ENCODE measurements at regions of chr2 and their contacts with region 1.

Region 1: GRCh38 chr2:96913398-96914202 is 43.7 kb upstream of the SEMA4C start:
- DNase-seq: peak; percentile 62 to 76 (median 67)
- H3K4me3 ChIP-seq: peak overlapping the region; percentile 57 to 76
- H3K4me3 Mint-ChIP-seq: peak overlapping the region; percentile 83 to 93 (median 88)
- H3K27ac ChIP-seq: peak overlapping the region; percentile 54
- H3K27ac Mint-ChIP-seq: peak overlapping the region; percentile 81 to 98 (median 97)
- H3K4me1 ChIP-seq: peaks cover 64% of the 10 kb centered on the region
- H3K4me1 Mint-ChIP-seq: peaks cover 45 to 85% (median 70%) of the 10 kb centered on the region in 4 donors
- H3K27me3 ChIP-seq: no peaks in the 10 kb centered on the region
- H3K27me3 Mint-ChIP-seq: no peaks in the 10 kb centered on the region

Region 2: GRCh38 chr2:96554293-96555145 is 359.1 kb before region 1 on chr2:
- CTCF ChIA-PET with region 1: no interaction called
- POLR2A ChIA-PET with region 1: no interaction called
- intact Hi-C with region 1: no loop called
- DNase-seq: peak; percentile 46 to 80 (median 69)
- H3K4me3 ChIP-seq: no peak overlapping the region
- H3K4me3 Mint-ChIP-seq: peak overlapping the region in 7 of 8 donors; percentile 15 to 69 (median 32)
- H3K27ac ChIP-seq: no peak overlapping the region
- H3K27ac Mint-ChIP-seq: peak overlapping the region in 4 of 7 donors; percentile 22 to 86 (median 82)
- H3K4me1 ChIP-seq: peaks cover 17% of the 10 kb centered on the region
- H3K4me1 Mint-ChIP-seq: peaks cover 1 to 32% (median 12%) of the 10 kb centered on the region in 4 donors
- H3K27me3 ChIP-seq: no peaks in the 10 kb centered on the region
- H3K27me3 Mint-ChIP-seq: no peaks in the 10 kb centered on the region

Region 3: DNA sequence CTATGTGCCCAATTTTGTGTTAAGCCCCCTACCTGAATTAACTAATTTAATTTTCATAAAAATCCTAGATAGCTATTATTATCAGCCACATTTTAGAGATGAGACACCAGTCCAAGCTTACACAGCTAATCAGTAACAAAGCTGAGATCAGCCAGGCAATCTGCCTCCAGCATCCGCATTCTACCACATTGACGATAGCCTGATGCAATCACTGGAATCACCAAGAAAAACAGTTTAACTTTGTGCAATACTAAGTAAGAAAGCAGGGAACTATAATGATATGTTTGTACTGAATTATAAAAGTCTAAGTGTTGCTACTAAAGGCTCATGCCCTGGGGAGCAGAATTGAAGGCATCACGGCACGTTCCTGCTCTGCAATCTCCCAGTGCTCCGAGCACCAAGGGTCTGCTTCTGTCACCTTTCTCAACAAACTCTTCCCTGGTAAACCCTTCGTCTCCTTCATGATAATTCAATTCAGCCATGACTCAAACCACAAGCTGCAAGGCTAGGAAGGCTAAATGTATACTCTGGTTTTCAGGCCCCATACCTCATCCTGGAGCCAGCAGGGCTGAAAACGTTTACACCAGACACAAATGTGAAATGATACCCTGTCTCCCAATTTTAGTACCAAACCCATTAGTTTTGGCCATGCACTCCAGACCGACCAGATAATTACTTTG is 294.9 kb before region 1 on chr2:
- CTCF ChIA-PET with region 1: no interaction called
- POLR2A ChIA-PET with region 1: no interaction called
- intact Hi-C with region 1: no loop called
- DNase-seq: no peak
- H3K4me3 ChIP-seq: no peak overlapping the region
- H3K4me3 Mint-ChIP-seq: no peak overlapping the region
- H3K27ac ChIP-seq: no peak overlapping the region
- H3K27ac Mint-ChIP-seq: peak overlapping the region in 3 of 7 donors; percentile 11 to 50 (median 43)
- H3K4me1 ChIP-seq: peaks cover 13% of the 10 kb centered on the region
- H3K4me1 Mint-ChIP-seq: peaks cover 13 to 40% (median 25%) of the 10 kb centered on the region in 4 donors
- H3K27me3 ChIP-seq: no peaks in the 10 kb centered on the region
- H3K27me3 Mint-ChIP-seq: no peaks in the 10 kb centered on the region

Region 4: GRCh38 chr2:96663789-96664645 is 249.6 kb before region 1 on chr2:
- CTCF ChIA-PET with region 1: no interaction called
- POLR2A ChIA-PET with region 1: no interaction called
- intact Hi-C with region 1: no loop called
- DNase-seq: no peak
- H3K4me3 ChIP-seq: no peak overlapping the region
- H3K4me3 Mint-ChIP-seq: no peak overlapping the region
- H3K27ac ChIP-seq: no peak overlapping the region
- H3K27ac Mint-ChIP-seq: no peak overlapping the region
- H3K4me1 ChIP-seq: no peaks in the 10 kb centered on the region
- H3K4me1 Mint-ChIP-seq: no peaks in the 10 kb centered on the region
- H3K27me3 ChIP-seq: no peaks in the 10 kb centered on the region
- H3K27me3 Mint-ChIP-seq: peaks cover 0 to 3% of the 10 kb centered on the region in 2 donors

Region 5: GRCh38 chr2:96888072-96889011 is 25.3 kb before region 1 on chr2:
- CTCF ChIA-PET with region 1: interaction called, 4 read pairs
- POLR2A ChIA-PET with region 1: interaction called, 50 read pairs
- intact Hi-C with region 1: no loop called
- DNase-seq: no peak
- H3K4me3 ChIP-seq: no peak overlapping the region
- H3K4me3 Mint-ChIP-seq: no peak overlapping the region
- H3K27ac ChIP-seq: no peak overlapping the region
- H3K27ac Mint-ChIP-seq: peak overlapping the region in 4 of 7 donors; percentile 50 to 86 (median 78)
- H3K4me1 ChIP-seq: peaks cover 30% of the 10 kb centered on the region
- H3K4me1 Mint-ChIP-seq: peaks cover 30 to 46% (median 36%) of the 10 kb centered on the region in 4 donors
- H3K27me3 ChIP-seq: no peaks in the 10 kb centered on the region
- H3K27me3 Mint-ChIP-seq: no peaks in the 10 kb centered on the region

Region 6: GRCh38 chr2:96903327-96903726 is 10.3 kb before region 1 on chr2:
- CTCF ChIA-PET with region 1: no interaction called
- POLR2A ChIA-PET with region 1: interaction called, 12 read pairs
- intact Hi-C with region 1: no loop called
- DNase-seq: no peak
- H3K4me3 ChIP-seq: no peak overlapping the region
- H3K4me3 Mint-ChIP-seq: no peak overlapping the region
- H3K27ac ChIP-seq: no peak overlapping the region
- H3K27ac Mint-ChIP-seq: no peak overlapping the region
- H3K4me1 ChIP-seq: peaks cover 4% of the 10 kb centered on the region
- H3K4me1 Mint-ChIP-seq: peaks cover 5 to 11% (median 10%) of the 10 kb centered on the region in 4 donors
- H3K27me3 ChIP-seq: no peaks in the 10 kb centered on the region
- H3K27me3 Mint-ChIP-seq: no peaks in the 10 kb centered on the region

Region 7: DNA sequence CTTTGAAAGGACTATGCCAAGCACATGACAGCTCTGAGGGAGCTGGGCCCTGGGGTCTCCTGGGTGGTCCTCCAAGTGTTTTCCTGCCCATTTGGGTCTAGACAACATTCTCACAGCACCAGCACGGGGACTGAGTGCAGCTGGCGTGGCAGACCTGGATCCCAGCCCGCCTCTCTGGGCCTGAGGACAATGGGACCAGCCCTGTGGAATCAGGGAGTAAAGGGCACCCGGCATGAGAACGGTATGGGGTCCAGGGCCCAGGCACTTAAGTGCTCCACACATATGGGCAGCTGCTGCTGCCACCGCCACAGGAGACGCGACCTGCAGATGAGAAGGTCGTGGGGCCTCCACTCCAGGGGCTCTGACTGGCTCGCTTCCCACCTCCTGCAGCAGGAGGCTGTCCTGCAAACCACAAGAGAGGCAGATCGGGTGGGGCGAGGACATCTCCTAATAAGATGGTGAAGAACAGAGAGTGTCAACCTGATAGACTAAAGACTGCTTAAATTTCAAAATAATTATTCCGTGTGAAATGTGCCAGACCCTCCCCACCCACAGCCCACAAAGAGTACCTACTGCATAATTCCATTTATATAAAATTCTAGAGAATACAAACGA is 26.5 kb after region 1 on chr2:
- CTCF ChIA-PET with region 1: interaction called, 3 read pairs
- POLR2A ChIA-PET with region 1: interaction called, 13 read pairs
- intact Hi-C with region 1: no loop called
- DNase-seq: no peak
- H3K4me3 ChIP-seq: no peak overlapping the region
- H3K4me3 Mint-ChIP-seq: peak overlapping the region in 5 of 8 donors; percentile 17 to 82 (median 67)
- H3K27ac ChIP-seq: no peak overlapping the region
- H3K27ac Mint-ChIP-seq: peak overlapping the region in 1 of 7 donors; percentile 37
- H3K4me1 ChIP-seq: peaks cover 26% of the 10 kb centered on the region
- H3K4me1 Mint-ChIP-seq: peaks cover 24 to 42% (median 27%) of the 10 kb centered on the region in 4 donors
- H3K27me3 ChIP-seq: no peaks in the 10 kb centered on the region
- H3K27me3 Mint-ChIP-seq: peaks cover 0 to 1% of the 10 kb centered on the region in 2 donors